ENCODE measurements at regions of chr6 and their contacts with region 1.

Region 1: GRCh38 chr6:16770701-16771569 is 9.7 kb upstream of the ATXN1 start:
- DNase-seq: peak; percentile 83
- H3K4me3 ChIP-seq: no peak overlapping the region
- H3K27ac ChIP-seq: peak overlapping the region; percentile 52 to 77 (median 70)
- H3K4me1 ChIP-seq: peaks cover 10 to 40% (median 24%) of the 10 kb centered on the region in 4 donors
- H3K27me3 ChIP-seq: no peaks in the 10 kb centered on the region
- CTCF ChIP-seq: peak; percentile 87 to 96 (median 90)
- EP300 ChIP-seq: no peak
- POLR2A ChIP-seq: no peak

Region 2: DNA sequence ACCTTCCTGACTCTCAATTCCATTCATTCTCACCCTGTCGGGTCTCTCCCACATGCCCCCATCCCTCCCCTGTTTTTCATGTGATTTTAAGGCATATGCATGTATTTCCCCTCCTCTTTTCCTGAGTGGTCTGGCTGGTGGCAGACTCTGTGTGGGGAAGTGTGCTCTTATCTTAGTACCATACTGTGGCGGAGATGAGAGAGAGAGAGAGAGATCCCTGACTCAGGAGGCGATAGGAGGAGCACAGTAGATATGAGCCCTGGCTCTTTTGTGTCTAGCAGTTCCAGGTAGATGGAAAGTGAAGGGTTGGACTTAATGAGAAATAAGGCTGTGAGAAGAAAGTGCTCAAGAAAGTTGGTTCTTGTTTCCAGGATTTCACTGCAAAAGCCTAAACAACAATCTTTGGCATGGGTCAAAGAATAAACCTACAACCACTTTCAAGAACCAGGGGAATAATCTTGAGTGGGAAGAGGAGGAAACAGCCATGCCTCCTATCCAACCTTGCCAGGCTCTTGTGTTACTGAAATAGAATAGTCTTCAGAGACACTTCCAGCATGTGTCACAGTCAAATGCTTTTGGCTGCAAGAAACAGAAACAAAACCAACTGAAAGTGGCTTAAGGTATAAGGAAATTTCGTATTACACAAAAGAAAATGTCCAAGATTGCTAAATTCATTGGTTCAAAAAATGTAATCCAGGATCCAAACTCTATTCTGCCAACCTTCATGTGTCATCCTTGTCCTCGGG is 765.8 kb before region 1 on chr6:
- in situ Hi-C with region 1: no loop called
- intact Hi-C with region 1: no loop called
- DNase-seq: no peak
- H3K4me3 ChIP-seq: no peak overlapping the region
- H3K27ac ChIP-seq: no peak overlapping the region
- H3K4me1 ChIP-seq: no peaks in the 10 kb centered on the region
- H3K27me3 ChIP-seq: no peaks in the 10 kb centered on the region
- CTCF ChIP-seq: no peak
- EP300 ChIP-seq: no peak
- POLR2A ChIP-seq: no peak

Region 3: GRCh38 chr6:16514249-16514648 is 256.7 kb before region 1 on chr6:
- in situ Hi-C with region 1: loop called (anchors 5 to 10 kb)
- intact Hi-C with region 1: loop called (anchors 10 kb)
- DNase-seq: no peak
- H3K4me3 ChIP-seq: no peak overlapping the region
- H3K27ac ChIP-seq: peak overlapping the region in 3 of 4 donors; percentile 15 to 49 (median 43)
- H3K4me1 ChIP-seq: peaks cover 8 to 35% (median 16%) of the 10 kb centered on the region in 4 donors
- H3K27me3 ChIP-seq: no peaks in the 10 kb centered on the region
- CTCF ChIP-seq: peak; percentile 34 to 49 (median 39)
- EP300 ChIP-seq: no peak
- POLR2A ChIP-seq: no peak

Region 4: GRCh38 chr6:16740097-16740496 is 30.8 kb before region 1 on chr6:
- in situ Hi-C with region 1: no loop called
- intact Hi-C with region 1: loop called (anchors 1 kb)
- DNase-seq: no peak
- H3K4me3 ChIP-seq: no peak overlapping the region
- H3K27ac ChIP-seq: peak overlapping the region; percentile 38 to 73 (median 60)
- H3K4me1 ChIP-seq: peaks cover 15 to 65% (median 37%) of the 10 kb centered on the region in 4 donors
- H3K27me3 ChIP-seq: no peaks in the 10 kb centered on the region
- CTCF ChIP-seq: no peak
- EP300 ChIP-seq: no peak
- POLR2A ChIP-seq: no peak

Region 5: GRCh38 chr6:17086469-17086868 is 315.5 kb after region 1 on chr6:
- in situ Hi-C with region 1: no loop called
- intact Hi-C with region 1: loop called (anchors 10 kb)
- DNase-seq: peak; percentile 40
- H3K4me3 ChIP-seq: no peak overlapping the region
- H3K27ac ChIP-seq: no peak overlapping the region
- H3K4me1 ChIP-seq: no peaks in the 10 kb centered on the region
- H3K27me3 ChIP-seq: no peaks in the 10 kb centered on the region
- CTCF ChIP-seq: peak; percentile 55 to 70 (median 65)
- EP300 ChIP-seq: no peak
- POLR2A ChIP-seq: no peak

Measured in transverse colon (tissue), 4 donors.